Naive thymus-derived CD4-positive, alpha-beta T cell (primary cell): ENCODE measurements at regions of chr1 and their contacts with region 1.

Region 1: DNA sequence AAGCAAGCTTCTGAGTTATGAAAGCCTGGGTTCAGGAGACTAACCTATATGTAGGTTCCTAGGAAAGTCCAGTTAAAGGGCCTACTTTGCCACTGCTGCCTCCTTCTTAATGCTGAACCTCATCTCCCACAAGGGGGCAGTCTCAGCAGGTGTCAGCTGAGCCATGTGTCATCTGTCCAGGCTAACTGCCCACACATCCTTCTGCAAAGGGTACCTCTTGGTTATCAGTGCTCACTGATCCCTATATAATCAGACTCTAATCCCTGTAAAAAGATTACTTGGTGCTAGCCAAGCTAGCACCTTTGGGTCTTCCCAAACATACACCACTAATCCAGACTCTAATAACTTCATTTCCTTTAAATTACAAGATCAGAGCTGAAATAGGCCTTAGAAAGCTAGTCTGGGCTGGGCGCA is 9.0 kb downstream of the PRDX1 start:
- DNase-seq: peak; percentile 23 to 58 (median 43)
- ATAC-seq: peak; percentile 89
- H3K4me3 ChIP-seq: no peak overlapping the region
- H3K4me3 Mint-ChIP-seq: no peak overlapping the region
- H3K27ac ChIP-seq: no peak overlapping the region
- H3K27ac Mint-ChIP-seq: peak overlapping the region in 3 of 9 donors; percentile 18 to 28 (median 21)
- H3K4me1 ChIP-seq: no peaks in the 10 kb centered on the region
- H3K4me1 Mint-ChIP-seq: peaks cover 0 to 26% (median 3%) of the 10 kb centered on the region in 7 donors
- H3K27me3 ChIP-seq: no peaks in the 10 kb centered on the region
- H3K27me3 Mint-ChIP-seq: no peaks in the 10 kb centered on the region

Region 2: GRCh38 chr1:45543581-45544417 is 31.2 kb after region 1 on chr1:
- CTCF ChIA-PET with region 1: interaction called, 10 read pairs
- POLR2A ChIA-PET with region 1: no interaction called
- intact Hi-C with region 1: no loop called
- DNase-seq: peak; percentile 31 to 87 (median 63)
- ATAC-seq: peak; percentile 98
- H3K4me3 ChIP-seq: peak overlapping the region; percentile 15
- H3K4me3 Mint-ChIP-seq: peak overlapping the region; percentile 33 to 82 (median 76)
- H3K27ac ChIP-seq: peak overlapping the region; percentile 55
- H3K27ac Mint-ChIP-seq: peak overlapping the region; percentile 35 to 93 (median 81)
- H3K4me1 ChIP-seq: peaks cover 12 to 13% of the 10 kb centered on the region in 2 donors
- H3K4me1 Mint-ChIP-seq: peaks cover 13 to 41% (median 32%) of the 10 kb centered on the region in 7 donors
- H3K27me3 ChIP-seq: no peaks in the 10 kb centered on the region
- H3K27me3 Mint-ChIP-seq: no peaks in the 10 kb centered on the region